Aorta (tissue), 5 donors: ENCODE measurements at regions of chr16 and their contacts with region 1.

Region 1: DNA sequence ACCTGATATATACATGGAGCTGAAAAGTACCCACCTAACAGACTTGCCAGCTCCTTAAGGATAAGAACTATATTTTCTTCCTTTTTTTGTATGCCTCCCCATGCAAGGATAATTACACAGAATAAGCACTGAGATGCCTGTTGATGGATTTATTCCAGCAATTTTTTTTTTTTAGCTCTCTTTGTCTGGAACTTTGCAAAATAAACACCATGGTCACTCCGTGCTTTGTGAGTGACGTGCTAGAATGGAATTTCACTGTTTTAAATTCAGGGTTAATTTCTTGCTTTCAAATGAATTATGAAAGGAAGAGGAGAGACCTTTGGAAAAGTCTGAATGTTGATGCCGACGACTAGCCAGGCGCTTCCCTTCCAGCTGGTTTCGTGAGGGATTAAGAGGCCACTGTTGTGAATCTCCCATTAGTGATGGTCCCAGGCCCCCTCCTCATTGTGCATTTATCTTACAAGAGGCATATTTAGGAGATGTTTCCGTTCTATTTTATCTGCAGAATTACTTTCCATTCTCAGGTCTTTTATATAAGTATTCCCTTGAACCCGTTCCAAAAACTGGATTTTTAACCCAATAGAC is 529.1 kb downstream of the WWOX start:
- DNase-seq: no peak
- ATAC-seq: no peak
- H3K4me3 ChIP-seq: peak overlapping the region in 1 of 2 donors; percentile 19
- H3K27ac ChIP-seq: no peak overlapping the region
- H3K4me1 ChIP-seq: no peaks in the 10 kb centered on the region
- H3K27me3 ChIP-seq: no peaks in the 10 kb centered on the region

Region 2: DNA sequence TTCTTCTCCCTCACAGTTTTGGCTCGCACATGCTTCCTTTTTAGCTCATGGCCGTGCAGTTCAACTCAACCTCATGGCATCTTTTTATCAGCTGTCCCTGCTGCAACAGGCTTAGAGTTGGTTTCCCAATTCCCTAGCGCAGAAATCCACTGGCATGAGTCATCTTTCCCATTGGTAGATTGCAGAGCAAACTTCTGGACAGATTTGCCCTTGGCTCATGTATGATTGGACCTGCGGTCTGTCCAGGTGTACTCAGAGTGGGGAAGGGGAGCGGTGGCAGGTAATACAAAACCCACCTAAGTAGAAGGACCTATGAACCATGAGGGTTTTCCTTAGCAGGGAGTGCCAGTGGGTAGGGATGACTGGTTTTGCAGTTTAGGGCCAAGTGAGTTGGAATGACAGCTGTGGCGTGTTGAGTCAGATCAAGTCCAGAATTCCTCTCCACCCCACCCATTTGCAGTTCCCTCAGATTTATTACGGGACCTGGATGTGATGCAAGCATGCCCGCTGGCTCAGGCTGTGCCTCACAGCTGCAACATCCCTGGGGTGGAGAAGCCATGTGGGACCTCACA is 55.6 kb after region 1 on chr16:
- intact Hi-C with region 1: loop called in 1 of 2 experiments (anchors 10 kb)
- DNase-seq: peak; percentile 75 to 86
- ATAC-seq: peak; percentile 82
- H3K4me3 ChIP-seq: no peak overlapping the region
- H3K27ac ChIP-seq: no peak overlapping the region
- H3K4me1 ChIP-seq: no peaks in the 10 kb centered on the region
- H3K27me3 ChIP-seq: no peaks in the 10 kb centered on the region